BJ (cell line): ENCODE measurements at regions of chr12 and their contacts with region 1.

Region 1: DNA sequence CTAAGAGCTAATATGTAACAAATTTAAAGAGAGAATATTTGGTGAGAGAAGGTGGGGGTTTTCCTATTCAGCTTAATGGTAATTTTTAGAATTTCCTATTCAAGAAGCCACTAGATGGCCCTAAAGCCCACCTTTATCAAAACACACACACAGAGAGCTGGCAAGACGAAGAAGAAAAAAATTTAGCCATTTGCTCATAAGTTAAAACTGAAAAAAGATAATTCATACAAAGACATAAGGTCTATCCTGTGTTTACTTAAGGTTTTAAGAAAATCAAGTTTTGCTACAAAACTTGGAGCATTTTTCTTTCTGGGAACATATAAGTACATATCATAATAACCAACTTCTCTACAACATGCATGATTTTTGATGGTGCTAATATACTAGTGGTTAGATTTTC is 46.8 kb upstream of the PCED1B start:
- DNase-seq: no peak
- H3K4me3 ChIP-seq: no peak overlapping the region
- H3K27me3 ChIP-seq: no peaks in the 10 kb centered on the region
- CTCF ChIP-seq: peak; percentile 53

Region 2: DNA sequence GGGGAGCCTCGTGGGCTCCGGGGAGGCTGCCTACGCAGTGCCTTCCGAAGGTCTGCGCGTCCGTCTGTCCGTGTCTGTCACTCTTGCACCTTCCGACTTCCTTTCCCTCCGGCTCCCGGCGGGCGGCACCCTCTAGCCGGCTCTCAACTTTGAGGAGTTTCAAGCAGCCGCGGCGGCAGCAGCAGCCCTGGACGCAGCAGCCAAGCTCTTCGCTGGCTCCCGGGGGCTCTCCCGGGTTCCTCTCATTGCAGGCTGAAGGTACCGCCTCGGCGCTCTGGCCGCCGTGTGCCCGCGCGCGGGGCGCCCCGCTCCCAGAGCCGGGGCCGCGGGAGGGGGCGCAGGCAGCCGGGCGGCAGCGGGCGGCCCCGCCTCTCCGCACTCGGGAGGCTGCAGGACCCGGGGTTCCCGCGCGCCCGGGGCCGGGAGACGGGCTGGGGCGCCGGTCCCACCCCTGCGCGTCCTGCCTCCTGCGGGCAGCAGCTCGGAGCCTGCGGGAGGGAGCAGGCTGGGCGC is 46.9 kb after region 1 on chr12 and contains the starts of genes AMIGO2 and PCED1B:
- CTCF ChIA-PET with region 1: interaction called, 12 read pairs
- POLR2A ChIA-PET with region 1: no interaction called
- DNase-seq: no peak
- H3K4me3 ChIP-seq: peak within 1 kb of the TSS; percentile 75
- H3K27me3 ChIP-seq: no peaks in the 10 kb centered on the region
- CTCF ChIP-seq: peak; percentile 56
- polyA plus RNA-seq, gene AMIGO2: 107 and 149 TPM in 2 replicates
- polyA plus RNA-seq, gene PCED1B: 4.8 and 7.8 TPM in 2 replicates

Region 3: GRCh38 chr12:47307680-47308399 is 275.2 kb after region 1 on chr12:
- CTCF ChIA-PET with region 1: interaction called, 34 read pairs
- POLR2A ChIA-PET with region 1: no interaction called
- DNase-seq: no peak
- H3K4me3 ChIP-seq: no peak overlapping the region
- H3K27me3 ChIP-seq: no peaks in the 10 kb centered on the region
- CTCF ChIP-seq: peak; percentile 65

Region 4: DNA sequence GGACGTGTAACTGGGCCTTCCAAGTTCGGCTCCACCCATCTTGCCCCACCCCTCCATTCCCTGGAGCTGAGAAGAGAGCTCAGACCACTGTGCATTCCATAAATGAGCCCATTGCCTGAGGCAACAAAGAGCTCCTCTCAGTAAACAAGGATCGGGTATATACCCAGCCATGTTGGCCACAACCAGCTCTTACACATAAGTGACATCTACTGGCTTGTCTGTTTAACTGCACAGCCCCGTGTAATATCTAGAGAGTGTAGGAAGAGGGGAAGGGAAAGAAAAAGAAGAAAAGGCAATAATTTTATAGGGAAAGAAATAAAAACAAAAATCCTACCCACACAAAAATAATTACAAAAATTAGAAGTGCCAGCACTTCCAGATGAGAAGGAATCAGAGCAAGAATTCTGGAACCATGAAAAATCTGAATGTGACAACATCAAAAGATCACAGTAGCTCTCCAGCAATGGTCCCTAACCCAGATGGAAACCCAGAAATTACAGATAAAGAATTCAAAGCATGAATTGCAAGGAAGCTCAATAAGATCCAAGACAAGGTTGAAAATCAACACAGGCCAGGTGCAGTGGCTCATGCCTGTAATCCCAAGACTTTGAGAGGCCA is 365.1 kb after region 1 on chr12:
- CTCF ChIA-PET with region 1: interaction called, 32 read pairs
- POLR2A ChIA-PET with region 1: no interaction called
- DNase-seq: no peak
- H3K4me3 ChIP-seq: no peak overlapping the region
- H3K27me3 ChIP-seq: no peaks in the 10 kb centered on the region
- CTCF ChIP-seq: peak; percentile 52

Region 5: DNA sequence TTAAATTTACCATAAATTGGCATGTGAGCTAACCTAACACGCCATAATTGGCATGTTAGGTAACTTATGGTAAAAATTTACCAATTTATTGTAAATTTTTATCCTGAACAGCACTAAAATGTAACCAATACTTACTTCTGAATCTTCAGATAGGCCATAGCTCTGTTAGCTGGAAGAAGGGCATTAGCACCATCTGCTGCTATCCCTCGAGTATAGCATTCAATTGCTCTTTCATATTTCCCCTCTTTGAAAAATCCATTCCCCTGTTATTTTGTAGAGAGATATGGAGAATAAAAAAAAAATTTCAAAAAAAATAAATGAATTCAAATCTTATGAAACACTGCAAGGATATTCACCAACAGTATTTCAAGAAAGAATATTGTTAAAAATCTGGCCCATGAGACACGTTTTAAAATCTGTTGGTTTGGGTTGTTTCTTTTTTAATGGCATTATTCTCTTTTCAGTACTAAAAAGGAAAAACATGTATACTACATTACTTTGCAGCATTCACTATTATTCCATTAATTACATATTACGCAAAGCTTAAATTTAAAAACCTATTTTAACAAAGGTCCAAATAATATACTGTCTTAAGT is 654.1 kb after region 1 on chr12:
- CTCF ChIA-PET with region 1: interaction called, 38 read pairs
- POLR2A ChIA-PET with region 1: no interaction called
- DNase-seq: no peak
- H3K4me3 ChIP-seq: no peak overlapping the region
- H3K27me3 ChIP-seq: no peaks in the 10 kb centered on the region
- CTCF ChIP-seq: peak; percentile 78